IMR-90 (cell line): ENCODE measurements at regions of chr7 and their contacts with region 1.

Region 1: GRCh38 chr7:144936314-144936713 is 100.5 kb upstream of the TPK1 start:
- DNase-seq: no peak
- ATAC-seq: no peak
- H3K4me3 ChIP-seq: no peak overlapping the region
- H3K27ac ChIP-seq: no peak overlapping the region
- H3K4me1 ChIP-seq: no peaks in the 10 kb centered on the region
- H3K27me3 ChIP-seq: no peaks in the 10 kb centered on the region
- CTCF ChIP-seq: no peak
- POLR2A ChIP-seq: no peak
- RAD21 ChIP-seq: no peak

Region 2: DNA sequence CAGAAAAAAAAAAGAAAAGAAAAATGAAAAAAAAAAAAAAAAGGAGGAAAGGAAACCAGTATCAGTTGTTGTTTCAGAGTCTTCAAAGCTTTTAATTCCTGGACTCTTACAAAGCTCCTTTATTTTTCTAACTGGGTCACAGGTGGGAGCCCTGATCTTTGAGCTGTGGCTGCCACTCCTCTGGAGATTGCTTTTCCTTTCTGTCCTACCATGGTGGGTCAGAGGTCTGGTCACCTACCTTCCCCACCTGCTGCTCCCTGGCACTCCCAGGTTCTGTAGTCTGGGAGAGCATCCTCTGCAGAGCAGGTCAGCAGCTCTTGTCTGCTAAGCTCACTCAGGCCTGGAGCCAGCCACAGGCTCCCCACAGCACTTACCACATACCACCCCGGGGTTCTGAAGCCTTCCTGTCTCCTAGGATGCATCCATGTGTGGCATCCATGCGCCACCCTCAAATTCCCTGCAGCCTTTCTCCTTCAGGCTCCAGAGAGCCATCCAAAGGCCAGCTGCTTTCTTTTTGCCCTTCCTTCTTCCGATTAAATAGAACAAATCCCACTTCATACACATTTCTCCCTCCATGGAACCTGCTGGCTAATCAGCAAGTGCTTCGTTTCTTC is 27.3 kb before region 1 on chr7:
- CTCF ChIA-PET with region 1: no interaction called
- POLR2A ChIA-PET with region 1: no interaction called
- dilution Hi-C with region 1: no loop called
- in situ Hi-C with region 1: no loop called
- intact Hi-C with region 1: loop called (anchors 1 kb)
- DNase-seq: no peak
- ATAC-seq: no peak
- H3K4me3 ChIP-seq: no peak overlapping the region
- H3K27ac ChIP-seq: no peak overlapping the region
- H3K4me1 ChIP-seq: no peaks in the 10 kb centered on the region
- H3K27me3 ChIP-seq: no peaks in the 10 kb centered on the region
- CTCF ChIP-seq: no peak
- POLR2A ChIP-seq: no peak
- RAD21 ChIP-seq: no peak